ENCODE measurements at regions of chr5 and their contacts with region 1.

Region 1: DNA sequence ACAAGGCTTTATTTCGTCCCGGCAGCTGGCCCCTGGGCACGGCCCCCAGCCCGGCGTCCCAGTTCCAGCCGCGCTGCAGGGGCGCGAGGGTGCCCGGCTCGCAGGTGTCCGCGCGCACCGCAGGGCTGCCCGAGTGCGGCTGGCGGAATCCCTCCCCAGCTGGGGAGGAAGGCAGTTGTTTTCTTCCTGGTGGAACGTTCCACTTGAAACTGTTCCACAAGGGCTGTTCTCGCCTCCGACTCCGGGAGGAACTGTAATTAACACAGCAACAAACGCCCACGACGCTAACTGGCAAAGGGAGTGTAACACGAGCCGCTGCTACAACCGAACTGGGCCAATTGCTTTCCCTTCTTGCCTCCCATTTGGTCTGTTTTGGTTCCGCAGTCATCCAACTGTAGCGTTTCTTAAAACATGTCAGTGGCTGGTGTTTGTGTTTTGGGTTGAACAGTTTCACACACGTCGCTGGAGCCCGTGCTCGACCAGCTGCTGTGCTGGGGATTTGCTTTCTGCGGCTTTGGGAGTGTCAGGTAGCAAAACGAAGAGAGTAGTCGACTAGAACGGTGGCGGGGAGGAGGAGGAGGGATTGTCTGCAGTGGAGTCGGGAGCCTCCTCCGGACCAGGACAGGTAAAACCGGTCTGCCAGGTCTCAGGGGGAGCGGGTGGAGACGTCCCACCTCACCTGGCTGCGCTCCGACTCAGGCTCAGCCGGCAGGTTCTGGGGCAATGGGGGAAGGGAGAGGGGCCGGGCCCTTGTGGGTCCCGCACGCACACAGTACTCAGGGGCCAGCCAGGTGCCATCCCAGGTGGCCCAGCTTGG is 131.6 kb upstream of the NIPBL start:
- DNase-seq: peak; percentile 81
- H3K4me3 ChIP-seq: peak overlapping the region; percentile 66 to 71 (median 71)
- H3K27ac ChIP-seq: no peak overlapping the region
- H3K4me1 ChIP-seq: peaks cover 15% of the 10 kb centered on the region
- H3K27me3 ChIP-seq: no peaks in the 10 kb centered on the region
- CTCF ChIP-seq: no peak

Region 2: GRCh38 chr5:36690041-36690961 is 54.7 kb before region 1 on chr5:
- CTCF ChIA-PET with region 1: no interaction called
- dilution Hi-C with region 1: no loop called
- in situ Hi-C with region 1: no loop called
- intact Hi-C with region 1: no loop called
- DNase-seq: peak; percentile 81
- H3K4me3 ChIP-seq: peak overlapping the region; percentile 41 to 70 (median 55)
- H3K27ac ChIP-seq: peak overlapping the region; percentile 54
- H3K4me1 ChIP-seq: peaks cover 22% of the 10 kb centered on the region
- H3K27me3 ChIP-seq: no peaks in the 10 kb centered on the region
- CTCF ChIP-seq: peak; percentile 89 to 94

Region 3: GRCh38 chr5:36870399-36871040 is 125.5 kb after region 1 on chr5:
- CTCF ChIA-PET with region 1: interaction called, 3 read pairs
- dilution Hi-C with region 1: no loop called
- in situ Hi-C with region 1: loop called (anchors 5 kb)
- intact Hi-C with region 1: loop called (anchors 1 kb)
- DNase-seq: peak; percentile 62
- H3K4me3 ChIP-seq: no peak overlapping the region
- H3K27ac ChIP-seq: no peak overlapping the region
- H3K4me1 ChIP-seq: no peaks in the 10 kb centered on the region
- H3K27me3 ChIP-seq: no peaks in the 10 kb centered on the region
- CTCF ChIP-seq: peak; percentile 53 to 67

Region 4: DNA sequence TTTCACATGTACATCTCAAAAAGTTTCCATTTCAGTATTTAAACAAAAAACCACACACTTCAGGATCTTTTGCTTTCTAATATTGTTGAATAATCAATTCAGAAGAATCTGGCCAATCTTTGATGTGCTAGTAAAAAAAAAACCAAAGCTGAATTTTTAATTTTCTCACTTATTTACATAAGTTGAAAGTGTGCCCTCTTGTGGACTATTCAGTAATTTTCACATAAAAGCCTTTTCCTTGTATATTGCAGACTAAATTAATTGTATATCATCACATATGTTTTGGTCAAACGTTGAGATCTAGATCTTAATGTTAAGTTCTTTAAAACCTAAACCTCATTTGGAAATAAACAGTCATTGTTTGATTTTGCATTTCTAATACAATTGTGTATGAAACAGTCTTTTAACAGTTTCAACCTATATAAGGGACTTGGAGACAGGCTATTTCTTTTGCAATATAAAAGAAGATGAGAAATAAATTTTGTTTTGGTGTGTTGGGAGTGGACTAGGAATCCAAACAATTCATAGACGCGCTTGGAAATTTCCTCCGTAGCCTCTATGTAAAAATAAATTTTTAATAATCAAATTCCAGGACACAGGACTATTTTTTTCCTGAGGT is 199.7 kb after region 1 on chr5:
- CTCF ChIA-PET with region 1: no interaction called
- dilution Hi-C with region 1: no loop called
- in situ Hi-C with region 1: no loop called
- intact Hi-C with region 1: loop called (anchors 2 kb)
- DNase-seq: peak; percentile 39
- H3K4me3 ChIP-seq: no peak overlapping the region
- H3K27ac ChIP-seq: no peak overlapping the region
- H3K4me1 ChIP-seq: peaks cover 9% of the 10 kb centered on the region
- H3K27me3 ChIP-seq: no peaks in the 10 kb centered on the region
- CTCF ChIP-seq: peak; percentile 51 to 52

Region 5: DNA sequence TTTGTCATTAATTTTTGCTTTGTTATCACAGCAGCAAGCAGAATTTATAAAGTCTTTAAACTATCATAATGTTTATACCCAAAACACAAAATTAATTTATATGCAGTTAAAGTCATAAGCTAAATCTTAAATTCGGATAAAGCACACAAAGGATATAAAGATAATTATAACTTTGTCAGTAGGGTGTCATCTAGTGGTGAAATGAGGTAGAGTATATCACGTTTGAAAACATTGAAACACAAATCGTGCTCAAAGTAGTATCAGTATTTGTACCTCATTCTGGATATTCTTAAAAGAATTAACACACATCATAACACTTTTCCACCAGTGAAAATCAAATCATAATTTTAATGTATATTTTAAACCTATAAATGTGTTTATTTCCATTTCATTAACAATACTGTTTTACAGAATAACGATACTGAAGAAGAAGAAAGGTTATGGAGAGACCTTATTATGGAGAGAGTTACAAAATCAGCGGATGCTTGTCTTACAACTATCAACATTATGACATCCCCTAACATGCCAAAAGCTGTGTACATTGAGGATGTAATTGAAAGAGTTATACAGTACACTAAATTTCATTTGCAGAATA is 261.1 kb after region 1 on chr5:
- CTCF ChIA-PET with region 1: no interaction called
- dilution Hi-C with region 1: no loop called
- in situ Hi-C with region 1: loop called in 1 of 2 experiments (anchors 10 kb)
- intact Hi-C with region 1: loop called (anchors 1 kb)
- DNase-seq: peak; percentile 20
- H3K4me3 ChIP-seq: no peak overlapping the region
- H3K27ac ChIP-seq: no peak overlapping the region
- H3K4me1 ChIP-seq: no peaks in the 10 kb centered on the region
- H3K27me3 ChIP-seq: no peaks in the 10 kb centered on the region
- CTCF ChIP-seq: peak; percentile 65 to 66

Measured in mammary epithelial cell (primary cell).